CD14-positive monocyte (primary cell): ENCODE measurements at regions of chr2 and their contacts with region 1.

Region 1: DNA sequence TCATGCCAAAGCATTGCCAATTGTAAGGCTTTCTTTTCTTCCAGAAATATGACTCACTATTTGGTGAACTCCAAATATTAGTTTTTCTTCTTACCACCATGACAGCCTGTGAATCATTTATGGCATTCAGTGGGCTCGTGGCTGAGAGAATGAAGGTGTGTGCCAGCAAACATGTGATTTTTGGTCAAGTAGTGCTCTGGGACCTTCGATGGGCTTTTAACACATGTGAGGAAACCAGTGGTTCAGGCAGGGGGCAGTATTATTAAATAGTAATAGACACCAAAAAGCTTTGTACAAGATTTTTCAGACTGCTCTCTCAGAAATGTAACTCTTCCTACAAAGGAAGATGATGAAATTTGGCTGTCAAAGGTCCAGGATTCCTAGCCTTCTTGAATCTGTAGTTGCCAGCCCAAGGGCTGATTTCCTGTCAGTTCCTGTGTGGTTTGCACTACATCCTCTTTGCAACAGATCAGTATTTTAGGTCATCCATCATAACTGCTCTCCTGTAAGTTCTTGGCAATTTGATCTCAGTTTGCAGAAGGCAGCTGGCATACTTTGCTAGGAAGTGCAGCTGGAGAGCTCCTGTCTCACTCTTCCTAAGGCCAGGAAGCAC is 64.3 kb downstream of the BABAM2 start:
- DNase-seq: peak; percentile 63 to 86 (median 78)
- H3K4me3 ChIP-seq: peak overlapping the region in 1 of 3 experiments; percentile 51
- H3K4me3 Mint-ChIP-seq: peak overlapping the region; percentile 37 to 66
- H3K27ac ChIP-seq: peak overlapping the region; percentile 52 to 87
- H3K27ac Mint-ChIP-seq: peak overlapping the region; percentile 85 to 98 (median 94)
- H3K4me1 ChIP-seq: peaks cover 68 to 79% of the 10 kb centered on the region in 2 donors
- H3K4me1 Mint-ChIP-seq: peaks cover 79% of the 10 kb centered on the region
- H3K27me3 ChIP-seq: no peaks in the 10 kb centered on the region
- H3K27me3 Mint-ChIP-seq: no peaks in the 10 kb centered on the region
- CTCF ChIP-seq: peak; percentile 20

Region 2: DNA sequence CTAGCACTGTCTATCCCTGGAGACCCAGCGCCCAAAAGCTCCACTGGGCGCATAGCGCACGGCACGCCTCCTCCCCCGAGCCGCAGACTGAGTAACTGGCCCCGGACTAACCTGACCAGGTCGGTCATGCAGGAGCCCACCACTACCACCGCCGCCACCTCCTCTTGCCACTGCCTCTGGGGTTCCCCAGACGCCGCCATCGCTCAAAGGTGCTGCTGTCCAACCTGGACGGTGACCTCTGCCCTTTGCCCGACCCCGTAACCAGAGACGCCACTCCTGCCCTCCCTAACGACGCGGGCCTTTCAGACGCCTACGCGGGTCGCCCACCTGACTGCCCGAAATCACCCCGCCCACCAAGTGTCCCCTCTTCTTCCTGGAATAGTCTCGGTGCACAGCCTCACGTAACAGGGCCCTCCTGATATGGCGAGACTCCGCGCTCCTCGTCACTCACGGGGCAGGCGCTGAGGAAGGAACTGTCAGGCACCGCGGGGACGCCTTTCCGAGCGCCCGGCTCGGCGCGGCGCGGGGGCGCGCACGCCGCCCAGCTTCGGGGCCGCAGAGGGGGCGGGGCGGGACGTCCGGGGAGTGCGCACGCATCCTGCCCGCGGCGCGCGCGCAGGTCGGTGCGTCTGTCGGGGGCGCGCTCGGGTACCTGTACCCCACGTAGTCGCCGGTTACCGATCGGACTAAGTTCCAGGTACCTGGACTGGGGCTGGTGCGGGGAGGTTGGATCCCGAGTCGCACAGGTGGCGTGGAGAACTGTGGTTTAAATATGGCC is 64.5 kb before region 1 on chr2 and contains the starts of genes BABAM2 and RBKS:
- intact Hi-C with region 1: loop called (anchors 5 kb)
- DNase-seq: peak; percentile 86 to 90 (median 86)
- H3K4me3 ChIP-seq: peak within 1 kb of the TSS; percentile 79 to 96 (median 87)
- H3K4me3 Mint-ChIP-seq: peak within 1 kb of the TSS; percentile 95 to 98
- H3K27ac ChIP-seq: peak within 1 kb of the TSS; percentile 99 to 100
- H3K27ac Mint-ChIP-seq: peak within 1 kb of the TSS; percentile 100
- H3K4me1 ChIP-seq: peaks cover 53 to 75% of the 10 kb centered on the region in 2 donors
- H3K4me1 Mint-ChIP-seq: peaks cover 69% of the 10 kb centered on the region
- H3K27me3 ChIP-seq: no peaks in the 10 kb centered on the region
- H3K27me3 Mint-ChIP-seq: peaks cover 0 to 4% (median 2%) of the 10 kb centered on the region in 3 donors
- CTCF ChIP-seq: no peak
- polyA plus RNA-seq, gene BABAM2: 33.2 to 52.8 (median 49.3) TPM
- polyA plus RNA-seq, gene RBKS: 3.9 to 39.1 (median 4.3) TPM